Activated CD4-positive, alpha-beta T cell treated with anti-CD3 and anti-CD28 coated beads for 36 hours (primary cell): ENCODE measurements at regions of chr5 and their contacts with region 1.

Region 1: GRCh38 chr5:75053304-75054133 is 1.2 kb upstream of the GCNT4 start:
- DNase-seq: peak; percentile 72
- ATAC-seq: peak; percentile 39
- H3K4me3 Mint-ChIP-seq: peak overlapping the region; percentile 79
- H3K27ac Mint-ChIP-seq: peak overlapping the region; percentile 82
- H3K4me1 Mint-ChIP-seq: peaks cover 82% of the 10 kb centered on the region
- H3K27me3 Mint-ChIP-seq: peaks cover 3% of the 10 kb centered on the region

Region 2: DNA sequence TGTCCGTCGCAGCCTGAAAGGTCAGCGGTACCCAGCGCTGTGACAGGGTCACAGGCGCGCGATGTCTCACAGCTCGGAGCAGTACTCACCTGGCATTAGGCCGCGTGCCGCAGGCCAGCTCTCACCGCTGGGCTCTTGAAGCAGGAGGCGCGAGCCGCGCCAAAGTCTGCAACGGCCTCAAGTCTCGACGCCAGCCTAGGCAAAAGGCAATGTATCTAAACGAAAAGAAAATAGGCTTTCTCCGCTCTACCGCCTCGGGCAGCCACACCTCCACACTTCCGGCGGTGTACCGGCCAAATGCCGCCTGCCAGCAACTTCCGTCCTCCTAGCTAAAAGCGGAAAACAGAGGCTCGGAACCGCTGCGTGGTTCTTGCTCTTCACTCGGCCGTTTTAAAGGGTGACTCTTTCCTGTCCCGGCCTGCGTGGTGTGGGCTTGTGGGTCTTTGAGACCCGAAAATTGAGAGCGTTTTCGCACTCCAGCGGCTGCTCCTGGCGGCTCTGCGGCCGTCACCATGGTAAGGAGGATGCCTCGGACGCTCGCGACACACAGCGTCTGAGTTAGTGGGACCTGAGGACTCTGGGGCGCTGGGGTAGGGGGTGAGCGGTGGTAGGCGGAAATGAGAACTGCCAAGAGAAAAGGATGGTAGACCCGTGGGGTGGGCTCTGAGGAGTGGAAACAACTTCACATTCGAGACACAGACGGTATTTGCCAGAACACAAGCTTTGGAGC is 286.5 kb before region 1 on chr5 and contains the starts of genes GFM2 and NSA2:
- CTCF ChIA-PET with region 1: interaction called, 3 read pairs
- POLR2A ChIA-PET with region 1: no interaction called
- intact Hi-C with region 1: loop called in 1 of 2 experiments (anchors 5 kb)
- DNase-seq: peak; percentile 95
- ATAC-seq: peak; percentile 85
- H3K4me3 Mint-ChIP-seq: peak within 1 kb of the TSS; percentile 94
- H3K27ac Mint-ChIP-seq: peak within 1 kb of the TSS; percentile 99
- H3K4me1 Mint-ChIP-seq: peaks cover 34% of the 10 kb centered on the region
- H3K27me3 Mint-ChIP-seq: no peaks in the 10 kb centered on the region
- total RNA-seq, gene GFM2: 34.7 to 40.4 TPM
- total RNA-seq, gene NSA2: 163 to 253 TPM

Region 3: GRCh38 chr5:75002271-75002670 is 51.2 kb before region 1 on chr5:
- CTCF ChIA-PET with region 1: no interaction called
- POLR2A ChIA-PET with region 1: no interaction called
- intact Hi-C with region 1: no loop called
- DNase-seq: no peak
- ATAC-seq: no peak
- H3K4me3 Mint-ChIP-seq: no peak overlapping the region
- H3K27ac Mint-ChIP-seq: no peak overlapping the region
- H3K4me1 Mint-ChIP-seq: no peaks in the 10 kb centered on the region
- H3K27me3 Mint-ChIP-seq: no peaks in the 10 kb centered on the region

Region 4: DNA sequence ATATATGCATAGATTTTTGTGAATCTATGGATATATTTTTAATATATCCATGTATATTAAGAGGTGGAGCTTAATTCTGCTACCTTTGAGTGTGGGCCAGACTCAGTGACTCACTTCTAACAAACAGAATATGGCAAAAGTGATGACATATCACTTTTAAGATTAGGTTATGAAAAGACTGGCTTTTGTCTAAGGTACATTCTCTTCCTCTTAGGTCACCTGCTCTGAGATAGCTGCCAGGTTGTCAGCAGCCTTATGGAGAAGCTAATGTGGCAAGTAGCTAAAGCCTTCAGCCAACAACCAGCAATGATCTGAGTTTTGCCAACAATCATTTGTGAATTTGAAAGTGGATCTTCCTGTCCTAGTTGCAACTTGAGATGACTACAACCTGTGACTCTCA is 99.3 kb after region 1 on chr5:
- CTCF ChIA-PET with region 1: interaction called, 10 read pairs
- POLR2A ChIA-PET with region 1: no interaction called
- intact Hi-C with region 1: no loop called
- DNase-seq: no peak
- ATAC-seq: no peak
- H3K4me3 Mint-ChIP-seq: no peak overlapping the region
- H3K27ac Mint-ChIP-seq: no peak overlapping the region
- H3K4me1 Mint-ChIP-seq: peaks cover 7% of the 10 kb centered on the region
- H3K27me3 Mint-ChIP-seq: no peaks in the 10 kb centered on the region

Region 5: DNA sequence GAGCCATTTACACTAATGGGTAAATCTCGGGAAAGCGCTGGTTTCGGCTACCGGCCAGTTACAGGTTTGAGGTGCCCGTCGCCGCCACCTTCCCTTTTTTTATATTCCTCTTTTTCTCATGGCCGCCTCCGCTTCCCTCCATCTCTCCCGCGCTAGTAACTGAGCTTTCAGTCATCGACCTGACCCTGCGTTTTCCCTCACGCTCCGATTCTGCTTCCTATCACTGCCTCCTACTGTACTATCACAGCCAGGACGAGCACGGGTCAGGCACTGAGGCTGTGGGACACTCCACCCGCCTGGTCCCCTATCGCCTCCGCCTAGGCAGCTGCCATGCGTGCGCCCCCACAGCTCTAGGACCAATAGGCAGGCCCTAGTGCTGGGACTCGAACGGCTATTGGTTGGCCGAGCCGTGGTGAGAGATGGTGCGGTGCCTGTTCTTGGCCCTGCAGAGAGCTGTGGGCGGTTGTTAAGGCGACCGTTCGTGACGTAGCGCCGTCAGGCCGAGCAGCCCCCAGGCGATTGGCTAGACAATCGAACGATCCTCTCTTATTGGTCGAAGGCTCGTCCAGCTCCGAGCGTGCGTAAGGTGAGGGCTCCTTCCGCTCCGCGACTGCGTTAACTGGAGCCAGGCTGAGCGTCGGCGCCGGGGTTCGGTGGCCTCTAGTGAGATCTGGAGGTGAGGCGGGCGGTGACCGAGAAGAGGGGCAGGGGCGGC is 283.3 kb after region 1 on chr5 and contains the start of gene HMGCR:
- CTCF ChIA-PET with region 1: interaction called, 5 read pairs
- POLR2A ChIA-PET with region 1: interaction called, 6 read pairs
- intact Hi-C with region 1: loop called (anchors 2 kb)
- DNase-seq: peak; percentile 99
- ATAC-seq: peak; percentile 96
- H3K4me3 Mint-ChIP-seq: no peak within 1 kb of the TSS
- H3K27ac Mint-ChIP-seq: no peak within 1 kb of the TSS
- H3K4me1 Mint-ChIP-seq: peaks cover 31% of the 10 kb centered on the region
- H3K27me3 Mint-ChIP-seq: no peaks in the 10 kb centered on the region
- total RNA-seq, gene HMGCR: 36.1 to 51.1 TPM

Region 6: GRCh38 chr5:75668977-75669689 is 615.6 kb after region 1 on chr5:
- CTCF ChIA-PET with region 1: no interaction called
- POLR2A ChIA-PET with region 1: interaction called, 4 read pairs
- intact Hi-C with region 1: loop called in 1 of 2 experiments (anchors 5 kb)
- DNase-seq: peak; percentile 82
- ATAC-seq: peak; percentile 97
- H3K4me3 Mint-ChIP-seq: peak overlapping the region; percentile 67
- H3K27ac Mint-ChIP-seq: peak overlapping the region; percentile 91
- H3K4me1 Mint-ChIP-seq: peaks cover 37% of the 10 kb centered on the region
- H3K27me3 Mint-ChIP-seq: no peaks in the 10 kb centered on the region

Region 7: GRCh38 chr5:76082772-76083554 is 1029.4 kb after region 1 on chr5 and contains the start of gene SV2C:
- CTCF ChIA-PET with region 1: no interaction called
- POLR2A ChIA-PET with region 1: no interaction called
- intact Hi-C with region 1: loop called in 1 of 2 experiments (anchors 5 kb)
- DNase-seq: peak; percentile 74
- ATAC-seq: peak; percentile 86
- H3K4me3 Mint-ChIP-seq: peak within 1 kb of the TSS; percentile 65
- H3K27ac Mint-ChIP-seq: no peak within 1 kb of the TSS
- H3K4me1 Mint-ChIP-seq: peaks cover 31% of the 10 kb centered on the region
- H3K27me3 Mint-ChIP-seq: peaks cover 63% of the 10 kb centered on the region
- total RNA-seq, gene SV2C: 0.02 TPM in 1 of 2 experiments, not detected in the other